Naive thymus-derived CD4-positive, alpha-beta T cell (primary cell): ENCODE measurements at regions of chrX and their contacts with region 1.

Region 1: DNA sequence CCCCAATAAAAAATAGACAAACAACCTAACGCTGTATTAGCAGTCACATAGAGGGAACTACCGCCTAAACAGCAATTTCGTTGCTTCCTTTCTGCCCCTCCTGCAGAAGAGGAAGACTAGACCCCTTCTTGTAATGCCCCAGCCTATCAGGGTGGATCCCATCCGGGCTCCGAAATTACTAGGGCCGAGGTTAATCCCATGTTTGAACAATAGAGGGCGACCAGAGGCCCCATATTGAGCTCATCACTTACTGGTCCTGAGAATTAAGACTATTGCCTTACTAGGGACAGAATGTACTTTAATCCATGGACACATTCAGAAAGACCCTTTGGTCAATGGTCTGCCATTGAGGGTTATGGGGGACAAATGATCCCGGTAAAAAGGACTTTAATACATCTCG is 11.8 kb upstream of the ZNF630 start:
- DNase-seq: peak in 8 of 9 donors; percentile 21 to 59 (median 44)
- ATAC-seq: peak; percentile 78
- H3K4me3 ChIP-seq: no peak overlapping the region
- H3K4me3 Mint-ChIP-seq: no peak overlapping the region
- H3K27ac ChIP-seq: no peak overlapping the region
- H3K27ac Mint-ChIP-seq: no peak overlapping the region
- H3K4me1 ChIP-seq: no peaks in the 10 kb centered on the region
- H3K4me1 Mint-ChIP-seq: peaks cover 0 to 3% (median 0%) of the 10 kb centered on the region in 7 donors
- H3K27me3 ChIP-seq: no peaks in the 10 kb centered on the region
- H3K27me3 Mint-ChIP-seq: no peaks in the 10 kb centered on the region

Region 2: GRCh38 chrX:47854474-47854873 is 228.7 kb before region 1 on chrX:
- CTCF ChIA-PET with region 1: no interaction called
- POLR2A ChIA-PET with region 1: no interaction called
- intact Hi-C with region 1: no loop called
- DNase-seq: peak in 7 of 9 donors; percentile 10 to 46 (median 32)
- ATAC-seq: peak; percentile 65
- H3K4me3 ChIP-seq: no peak overlapping the region
- H3K4me3 Mint-ChIP-seq: no peak overlapping the region
- H3K27ac ChIP-seq: no peak overlapping the region
- H3K27ac Mint-ChIP-seq: peak overlapping the region in 2 of 9 donors; percentile 11 to 51
- H3K4me1 ChIP-seq: no peaks in the 10 kb centered on the region
- H3K4me1 Mint-ChIP-seq: peaks cover 0 to 6% (median 4%) of the 10 kb centered on the region in 7 donors
- H3K27me3 ChIP-seq: no peaks in the 10 kb centered on the region
- H3K27me3 Mint-ChIP-seq: no peaks in the 10 kb centered on the region

Region 3: GRCh38 chrX:48156014-48156413 is 72.8 kb after region 1 on chrX:
- CTCF ChIA-PET with region 1: no interaction called
- POLR2A ChIA-PET with region 1: no interaction called
- intact Hi-C with region 1: no loop called
- DNase-seq: no peak
- ATAC-seq: no peak
- H3K4me3 ChIP-seq: no peak overlapping the region
- H3K4me3 Mint-ChIP-seq: no peak overlapping the region
- H3K27ac ChIP-seq: no peak overlapping the region
- H3K27ac Mint-ChIP-seq: no peak overlapping the region
- H3K4me1 ChIP-seq: no peaks in the 10 kb centered on the region
- H3K4me1 Mint-ChIP-seq: no peaks in the 10 kb centered on the region
- H3K27me3 ChIP-seq: no peaks in the 10 kb centered on the region
- H3K27me3 Mint-ChIP-seq: peaks cover 0 to 2% (median 0%) of the 10 kb centered on the region in 5 donors

Region 4: DNA sequence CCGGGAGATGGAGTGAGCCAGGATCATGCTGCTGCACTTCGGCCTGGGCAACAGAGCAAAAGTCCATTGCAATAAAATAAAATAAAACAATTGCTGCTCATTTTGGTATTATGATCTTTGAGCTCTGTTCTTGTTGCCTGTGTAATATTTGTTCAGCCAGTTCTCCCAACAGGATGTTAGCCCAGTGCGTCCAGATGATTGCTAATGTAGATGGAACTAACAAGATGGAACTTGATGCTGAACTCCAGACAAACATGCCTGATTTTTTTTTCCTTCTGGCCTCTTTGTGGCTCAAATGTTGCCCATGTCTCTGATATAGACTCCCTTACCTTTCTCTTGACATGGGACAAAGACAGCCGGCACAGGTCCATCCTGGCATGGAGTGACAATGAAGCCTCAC is 97.6 kb after region 1 on chrX:
- CTCF ChIA-PET with region 1: no interaction called
- POLR2A ChIA-PET with region 1: no interaction called
- intact Hi-C with region 1: loop called in 1 of 2 experiments (anchors 5 kb)
- DNase-seq: no peak
- ATAC-seq: no peak
- H3K4me3 ChIP-seq: no peak overlapping the region
- H3K4me3 Mint-ChIP-seq: no peak overlapping the region
- H3K27ac ChIP-seq: no peak overlapping the region
- H3K27ac Mint-ChIP-seq: no peak overlapping the region
- H3K4me1 ChIP-seq: no peaks in the 10 kb centered on the region
- H3K4me1 Mint-ChIP-seq: no peaks in the 10 kb centered on the region
- H3K27me3 ChIP-seq: no peaks in the 10 kb centered on the region
- H3K27me3 Mint-ChIP-seq: peaks cover 0 to 8% (median 0%) of the 10 kb centered on the region in 5 donors

Region 5: DNA sequence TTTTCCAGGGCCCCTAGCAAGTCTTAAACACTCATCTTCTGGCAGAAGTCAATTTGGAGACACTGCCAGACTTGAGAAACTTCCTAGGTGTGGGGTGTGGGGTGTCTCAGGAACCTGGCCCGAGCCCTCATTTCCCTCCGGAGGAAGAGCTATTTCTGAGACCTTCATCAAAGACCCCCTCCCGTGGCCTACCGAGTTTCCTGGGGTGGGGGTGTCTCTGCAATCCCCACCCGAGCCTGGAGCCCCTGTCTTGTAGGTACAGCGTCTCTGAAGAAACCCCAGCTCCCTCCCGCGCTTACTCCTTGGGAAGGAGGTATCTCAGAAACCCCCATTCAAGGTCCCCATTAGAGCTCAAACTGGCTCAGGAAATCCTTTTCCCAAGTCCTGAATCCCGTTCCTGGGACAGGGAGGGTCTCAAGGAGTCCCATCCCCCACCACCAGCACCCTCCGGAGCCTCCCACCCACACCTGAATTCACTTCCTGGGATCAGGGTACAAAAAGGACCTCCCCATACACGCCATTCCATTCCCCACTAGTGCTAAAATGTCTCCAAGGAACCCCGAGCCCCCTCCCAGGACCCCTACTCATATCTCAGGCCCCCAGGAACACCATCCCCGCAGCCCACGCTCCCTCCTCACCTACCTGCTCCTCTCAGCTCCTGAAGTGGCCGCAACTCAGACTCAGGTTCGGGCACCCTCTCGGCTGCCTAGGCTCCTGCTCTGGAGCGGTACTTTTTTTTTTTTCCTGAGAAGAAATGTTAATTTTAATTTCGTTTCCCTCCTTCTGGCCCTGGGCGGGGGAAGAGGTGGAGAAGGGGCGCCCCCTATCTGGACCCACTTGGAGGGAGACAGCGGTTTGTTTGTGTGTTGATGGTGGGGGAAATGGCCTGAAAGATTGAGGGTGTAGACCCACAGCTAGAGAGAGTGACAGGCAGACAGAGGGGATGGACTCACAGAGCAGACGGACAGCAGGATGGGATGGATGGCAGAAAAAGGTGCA is 385.8 kb after region 1 on chrX:
- CTCF ChIA-PET with region 1: interaction called, 3 read pairs
- POLR2A ChIA-PET with region 1: no interaction called
- intact Hi-C with region 1: loop called in 1 of 2 experiments (anchors 1 kb)
- DNase-seq: peak in 7 of 9 donors; percentile 16 to 38 (median 24)
- ATAC-seq: peak; percentile 64
- H3K4me3 ChIP-seq: peak overlapping the region; percentile 64
- H3K4me3 Mint-ChIP-seq: peak overlapping the region; percentile 89 to 97 (median 92)
- H3K27ac ChIP-seq: peak overlapping the region; percentile 73
- H3K27ac Mint-ChIP-seq: peak overlapping the region; percentile 73 to 96 (median 82)
- H3K4me1 ChIP-seq: peaks cover 0 to 5% of the 10 kb centered on the region in 2 donors
- H3K4me1 Mint-ChIP-seq: peaks cover 12 to 39% (median 23%) of the 10 kb centered on the region in 7 donors
- H3K27me3 ChIP-seq: no peaks in the 10 kb centered on the region
- H3K27me3 Mint-ChIP-seq: no peaks in the 10 kb centered on the region

Region 6: DNA sequence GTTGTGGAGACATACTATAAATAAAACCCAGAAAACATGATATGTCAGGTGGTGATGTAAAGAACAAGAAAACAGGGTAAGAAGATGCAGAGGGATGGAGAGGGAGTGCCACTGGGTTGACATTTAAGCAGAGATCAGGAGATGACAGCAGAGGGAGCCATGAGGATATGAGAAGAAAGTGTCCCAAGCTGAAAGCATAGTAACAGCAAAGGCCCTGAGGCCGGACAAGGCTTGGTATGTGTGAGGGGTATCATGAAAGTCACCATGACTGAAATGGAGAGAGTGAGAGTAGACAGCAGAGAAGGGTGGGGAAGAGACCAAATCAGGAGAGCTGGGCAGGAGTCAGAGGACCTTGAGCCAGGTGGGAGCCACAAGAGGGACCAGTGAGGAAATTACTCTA is 1036.9 kb after region 1 on chrX:
- CTCF ChIA-PET with region 1: no interaction called
- POLR2A ChIA-PET with region 1: no interaction called
- intact Hi-C with region 1: no loop called
- DNase-seq: no peak
- ATAC-seq: no peak
- H3K4me3 ChIP-seq: no peak overlapping the region
- H3K4me3 Mint-ChIP-seq: peak overlapping the region in 3 of 10 donors; percentile 9 to 24 (median 12)
- H3K27ac ChIP-seq: no peak overlapping the region
- H3K27ac Mint-ChIP-seq: peak overlapping the region in 2 of 9 donors; percentile 12 to 30
- H3K4me1 ChIP-seq: peaks cover 16 to 18% of the 10 kb centered on the region in 2 donors
- H3K4me1 Mint-ChIP-seq: peaks cover 32 to 59% (median 37%) of the 10 kb centered on the region in 7 donors
- H3K27me3 ChIP-seq: no peaks in the 10 kb centered on the region
- H3K27me3 Mint-ChIP-seq: no peaks in the 10 kb centered on the region